ENCODE measurements at regions of chr1 and their contacts with region 1.

Region 1: GRCh38 chr1:156677616-156678596 is 699 bp upstream of the NES start:
- DNase-seq: peak; percentile 78 to 87
- ATAC-seq: peak; percentile 71 to 90 (median 76)
- H3K4me3 ChIP-seq: peak overlapping the region; percentile 74
- H3K27ac ChIP-seq: peak overlapping the region; percentile 80
- H3K4me1 ChIP-seq: peaks cover 37% of the 10 kb centered on the region
- H3K27me3 ChIP-seq: peaks cover 0 to 9% (median 2%) of the 10 kb centered on the region in 3 donors
- CTCF ChIP-seq: peak; percentile 90

Region 2: GRCh38 chr1:156625436-156626078 is 52.3 kb before region 1 on chr1:
- intact Hi-C with region 1: loop called in 1 of 2 experiments (anchors 2 kb)
- DNase-seq: peak; percentile 62 to 83
- ATAC-seq: peak; percentile 69 to 85 (median 78)
- H3K4me3 ChIP-seq: peak overlapping the region; percentile 60
- H3K27ac ChIP-seq: no peak overlapping the region
- H3K4me1 ChIP-seq: peaks cover 13% of the 10 kb centered on the region
- H3K27me3 ChIP-seq: peaks cover 0 to 54% (median 16%) of the 10 kb centered on the region in 3 donors
- CTCF ChIP-seq: peak; percentile 87

Region 3: DNA sequence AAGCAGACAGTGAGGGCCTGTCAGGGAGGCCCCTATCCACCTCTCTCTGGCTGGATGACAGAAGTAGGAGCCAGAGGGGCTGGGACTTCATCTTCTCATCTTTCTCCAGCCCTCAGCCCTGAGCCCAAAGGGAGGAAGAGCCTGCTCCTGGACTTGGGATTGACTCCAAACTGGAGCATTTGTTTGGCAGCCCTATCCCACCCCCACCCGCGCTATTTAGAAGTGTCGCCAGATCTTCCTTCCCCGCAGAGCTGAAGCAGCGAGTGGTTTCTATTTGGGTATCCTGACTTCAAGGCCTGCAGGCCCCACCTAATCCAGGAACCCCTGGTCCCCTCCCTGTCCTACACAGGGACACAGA is 10.3 kb before region 1 on chr1:
- intact Hi-C with region 1: loop called in 1 of 2 experiments (anchors 1 kb)
- DNase-seq: peak; percentile 44 to 73
- ATAC-seq: peak; percentile 41 to 68 (median 65)
- H3K4me3 ChIP-seq: peak overlapping the region; percentile 28
- H3K27ac ChIP-seq: peak overlapping the region; percentile 99
- H3K4me1 ChIP-seq: peaks cover 91% of the 10 kb centered on the region
- H3K27me3 ChIP-seq: no peaks in the 10 kb centered on the region
- CTCF ChIP-seq: no peak